WTC11 (cell line): ENCODE measurements at regions of chr4 and their contacts with region 1.

Region 1: GRCh38 chr4:4564522-4564921 is 22.7 kb upstream of the STX18 start:
- DNase-seq: no peak
- ATAC-seq: no peak
- H3K4me3 Mint-ChIP-seq: no peak overlapping the region
- H3K27ac Mint-ChIP-seq: no peak overlapping the region
- H3K4me1 Mint-ChIP-seq: no peaks in the 10 kb centered on the region
- H3K27me3 Mint-ChIP-seq: no peaks in the 10 kb centered on the region
- CTCF ChIP-seq: no peak

Region 2: DNA sequence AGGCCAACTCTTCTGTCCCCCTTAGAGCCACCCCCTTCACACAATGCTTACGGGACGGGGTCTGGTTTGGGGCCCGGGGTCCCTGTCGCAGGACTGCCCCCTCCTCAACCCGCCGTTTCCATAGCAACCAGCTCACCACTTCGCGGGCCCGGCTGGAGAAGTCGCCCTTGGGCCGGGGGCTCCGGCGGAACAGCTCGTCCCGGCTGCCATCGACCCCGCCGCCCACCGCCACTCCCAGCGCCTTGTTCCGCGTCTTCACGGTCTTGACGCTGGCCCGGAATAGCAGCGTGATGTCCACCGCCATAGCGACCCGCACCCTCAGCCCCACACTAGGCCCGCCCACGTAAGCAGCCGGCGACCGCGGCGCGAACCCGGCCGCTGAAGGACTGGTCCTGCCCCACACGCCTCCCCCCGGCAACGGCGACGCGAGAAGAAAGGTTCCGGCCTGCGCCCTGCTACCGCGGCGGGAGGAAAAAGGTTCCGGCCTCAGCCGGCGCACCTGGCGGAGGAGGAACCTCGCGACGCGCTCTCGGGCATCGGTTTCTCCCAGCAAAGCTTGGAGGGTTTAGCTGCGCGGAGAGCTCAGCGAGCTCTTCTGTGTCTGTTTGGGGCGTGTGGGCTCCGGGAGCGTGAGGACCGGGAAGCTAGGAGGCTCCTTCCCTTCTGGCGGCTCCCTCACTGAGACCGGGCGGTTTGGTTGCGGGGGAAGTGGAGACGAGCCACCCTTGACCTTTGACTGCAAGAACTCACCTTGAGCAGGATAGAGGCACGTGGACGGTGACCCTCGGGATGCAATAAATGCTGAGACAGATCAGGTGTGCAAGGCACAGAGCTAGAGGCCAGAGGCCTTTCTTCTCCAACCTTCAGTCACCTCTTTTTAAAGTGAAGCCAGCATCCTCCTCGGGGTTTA is 22.6 kb before region 1 on chr4 and contains the start of gene STX18:
- CTCF ChIA-PET with region 1: no interaction called
- POLR2A ChIA-PET with region 1: no interaction called
- DNase-seq: peak; percentile 88
- ATAC-seq: peak; percentile 95
- H3K4me3 Mint-ChIP-seq: peak within 1 kb of the TSS; percentile 98
- H3K27ac Mint-ChIP-seq: peak within 1 kb of the TSS; percentile 98
- H3K4me1 Mint-ChIP-seq: peaks cover 23% of the 10 kb centered on the region
- H3K27me3 Mint-ChIP-seq: no peaks in the 10 kb centered on the region
- CTCF ChIP-seq: no peak
- total RNA-seq, gene STX18: 14.1 to 16.9 TPM (median 16.7 TPM) in 3 replicates

Region 3: GRCh38 chr4:4575273-4576211 is 11.0 kb after region 1 on chr4:
- CTCF ChIA-PET with region 1: interaction called, 12 read pairs
- POLR2A ChIA-PET with region 1: interaction called, 3 read pairs
- DNase-seq: peak; percentile 81
- ATAC-seq: peak; percentile 93
- H3K4me3 Mint-ChIP-seq: peak overlapping the region; percentile 66
- H3K27ac Mint-ChIP-seq: no peak overlapping the region
- H3K4me1 Mint-ChIP-seq: peaks cover 26% of the 10 kb centered on the region
- H3K27me3 Mint-ChIP-seq: peaks cover 27% of the 10 kb centered on the region
- CTCF ChIP-seq: no peak

Region 4: DNA sequence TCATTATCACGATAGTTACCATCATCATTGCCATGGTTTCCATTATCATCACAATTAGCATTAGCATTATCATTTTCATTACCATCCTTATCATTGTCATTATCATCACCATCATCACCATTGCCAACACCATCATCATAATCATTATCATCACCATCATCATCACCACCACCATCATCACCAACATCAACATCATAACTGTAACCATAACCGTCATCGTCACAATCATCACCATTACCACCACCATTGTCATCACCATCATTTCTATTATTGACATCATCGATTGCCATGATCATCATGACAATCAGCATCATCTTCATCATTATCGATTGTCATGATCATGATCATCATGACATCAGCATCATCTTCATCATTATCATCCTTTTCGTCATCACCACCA is 206.1 kb after region 1 on chr4:
- CTCF ChIA-PET with region 1: no interaction called
- POLR2A ChIA-PET with region 1: no interaction called
- DNase-seq: no peak
- ATAC-seq: no peak
- H3K4me3 Mint-ChIP-seq: no peak overlapping the region
- H3K27ac Mint-ChIP-seq: no peak overlapping the region
- H3K4me1 Mint-ChIP-seq: peaks cover 10% of the 10 kb centered on the region; the same call in 1 of the 2 replicates
- H3K27me3 Mint-ChIP-seq: peaks cover 2% of the 10 kb centered on the region
- CTCF ChIP-seq: no peak